Endothelial cell of umbilical vein (primary cell): ENCODE measurements at regions of chr19 and their contacts with region 1.

Region 1: GRCh38 chr19:18349524-18350128 is 9.2 kb downstream of the PGPEP1 start:
- DNase-seq: peak; percentile 67
- H3K4me3 ChIP-seq: no peak overlapping the region
- H3K27ac ChIP-seq: no peak overlapping the region
- H3K4me1 ChIP-seq: no peaks in the 10 kb centered on the region
- H3K27me3 ChIP-seq: no peaks in the 10 kb centered on the region
- CTCF ChIP-seq: peak; percentile 80 to 86
- POLR2A ChIP-seq: no peak

Region 2: DNA sequence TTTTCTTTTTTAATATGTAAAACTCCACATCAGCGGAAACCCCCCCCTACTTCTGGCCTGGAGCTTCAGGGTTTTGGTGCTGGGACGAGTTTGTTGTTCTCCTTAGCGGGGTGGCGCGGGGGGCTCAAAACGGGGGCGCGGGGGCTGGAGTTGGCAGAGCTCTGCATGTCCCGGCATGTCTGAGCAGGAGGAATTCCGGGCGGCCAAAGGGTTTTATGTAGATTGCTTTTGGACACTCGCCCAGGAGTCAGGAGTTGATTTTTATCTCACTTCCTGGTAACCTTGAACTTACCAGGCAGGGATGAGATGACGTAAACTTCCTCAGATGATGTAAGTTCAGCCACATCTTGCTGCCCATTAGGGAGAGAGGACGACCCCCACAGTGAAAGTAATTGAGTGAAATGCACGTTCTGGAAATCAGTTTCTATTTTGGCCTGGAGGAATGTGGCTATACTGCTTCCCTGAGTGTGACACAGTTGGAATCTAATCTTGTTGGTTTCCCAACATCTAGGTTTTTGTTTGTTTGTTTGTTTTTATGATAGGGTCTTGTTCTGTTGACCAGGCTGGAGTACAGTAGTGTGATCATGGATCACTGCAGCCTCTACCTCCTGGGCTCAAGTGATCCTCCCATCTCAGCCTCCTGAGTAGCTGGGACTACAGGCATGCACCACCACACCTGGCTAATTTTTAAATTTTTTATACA is 15.4 kb after region 1 on chr19:
- CTCF ChIA-PET with region 1: interaction called, 20 read pairs
- POLR2A ChIA-PET with region 1: interaction called, 3 read pairs
- dilution Hi-C with region 1: no loop called
- intact Hi-C with region 1: no loop called
- DNase-seq: peak; percentile 98
- H3K4me3 ChIP-seq: no peak overlapping the region
- H3K27ac ChIP-seq: peak overlapping the region; percentile 91
- H3K4me1 ChIP-seq: peaks cover 28% of the 10 kb centered on the region
- H3K27me3 ChIP-seq: no peaks in the 10 kb centered on the region
- CTCF ChIP-seq: no peak
- POLR2A ChIP-seq: peak; percentile 47

Region 3: DNA sequence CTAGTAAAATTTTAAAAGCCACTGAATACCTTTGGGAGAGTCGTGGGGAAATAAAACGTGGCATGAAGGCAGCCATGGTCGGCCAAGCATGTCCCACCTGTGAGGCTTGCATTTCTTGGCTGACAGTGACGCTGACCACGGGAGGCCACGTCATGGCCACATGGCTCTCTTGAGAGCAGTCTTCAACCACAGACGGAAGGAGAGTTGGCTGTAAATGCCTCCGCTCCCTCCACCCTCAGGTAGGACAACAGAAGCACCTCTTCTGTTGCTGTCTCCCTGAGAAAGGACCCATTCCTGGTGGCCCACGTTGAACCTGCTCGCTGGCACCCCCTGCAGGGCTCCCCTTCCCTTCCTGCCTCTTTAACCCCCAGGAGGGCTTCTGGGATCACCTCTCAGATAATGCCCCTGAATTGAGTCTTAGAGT is 58.4 kb after region 1 on chr19:
- CTCF ChIA-PET with region 1: interaction called, 160 read pairs
- POLR2A ChIA-PET with region 1: no interaction called
- dilution Hi-C with region 1: no loop called
- intact Hi-C with region 1: loop called (anchors 1 kb)
- DNase-seq: no peak
- H3K4me3 ChIP-seq: no peak overlapping the region
- H3K27ac ChIP-seq: no peak overlapping the region
- H3K4me1 ChIP-seq: no peaks in the 10 kb centered on the region
- H3K27me3 ChIP-seq: no peaks in the 10 kb centered on the region
- CTCF ChIP-seq: peak; percentile 55 to 69
- POLR2A ChIP-seq: no peak

Region 4: DNA sequence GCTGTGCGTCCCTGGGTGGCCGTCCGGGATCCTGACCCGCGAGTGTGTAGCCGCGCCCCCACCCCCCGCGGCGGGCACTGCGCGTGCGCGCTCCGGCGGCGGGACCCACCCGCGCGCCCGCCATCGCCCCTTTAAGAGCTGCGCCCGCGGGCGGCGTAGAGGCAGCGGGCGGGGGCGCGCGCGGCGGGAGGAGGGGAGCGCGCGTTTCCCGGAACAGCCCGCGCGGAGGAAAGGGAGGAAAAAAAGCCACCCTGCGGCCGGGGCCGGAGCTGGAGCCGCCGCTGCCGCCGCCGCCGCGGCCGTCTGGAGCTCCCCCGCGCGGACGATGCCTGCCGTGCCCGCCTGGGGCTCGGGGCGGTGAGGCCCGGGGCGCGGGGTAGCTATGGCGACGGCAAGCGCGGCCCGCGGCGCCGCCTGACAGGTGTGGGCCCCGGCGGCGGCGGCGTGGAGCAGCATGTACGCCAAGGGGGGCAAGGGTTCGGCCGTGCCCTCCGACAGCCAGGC is 69.6 kb after region 1 on chr19 and contains the start of gene SSBP4:
- CTCF ChIA-PET with region 1: interaction called, 160 read pairs
- POLR2A ChIA-PET with region 1: no interaction called
- dilution Hi-C with region 1: no loop called
- intact Hi-C with region 1: no loop called
- DNase-seq: peak; percentile 76
- H3K4me3 ChIP-seq: peak within 1 kb of the TSS; percentile 50 to 73 (median 53)
- H3K27ac ChIP-seq: peak within 1 kb of the TSS; percentile 54
- H3K4me1 ChIP-seq: peaks cover 46% of the 10 kb centered on the region
- H3K27me3 ChIP-seq: no peaks in the 10 kb centered on the region
- CTCF ChIP-seq: peak; percentile 19 to 31
- POLR2A ChIP-seq: peak; percentile 49
- total RNA-seq, gene SSBP4: 140 and 151 TPM in 2 replicates

Region 5: DNA sequence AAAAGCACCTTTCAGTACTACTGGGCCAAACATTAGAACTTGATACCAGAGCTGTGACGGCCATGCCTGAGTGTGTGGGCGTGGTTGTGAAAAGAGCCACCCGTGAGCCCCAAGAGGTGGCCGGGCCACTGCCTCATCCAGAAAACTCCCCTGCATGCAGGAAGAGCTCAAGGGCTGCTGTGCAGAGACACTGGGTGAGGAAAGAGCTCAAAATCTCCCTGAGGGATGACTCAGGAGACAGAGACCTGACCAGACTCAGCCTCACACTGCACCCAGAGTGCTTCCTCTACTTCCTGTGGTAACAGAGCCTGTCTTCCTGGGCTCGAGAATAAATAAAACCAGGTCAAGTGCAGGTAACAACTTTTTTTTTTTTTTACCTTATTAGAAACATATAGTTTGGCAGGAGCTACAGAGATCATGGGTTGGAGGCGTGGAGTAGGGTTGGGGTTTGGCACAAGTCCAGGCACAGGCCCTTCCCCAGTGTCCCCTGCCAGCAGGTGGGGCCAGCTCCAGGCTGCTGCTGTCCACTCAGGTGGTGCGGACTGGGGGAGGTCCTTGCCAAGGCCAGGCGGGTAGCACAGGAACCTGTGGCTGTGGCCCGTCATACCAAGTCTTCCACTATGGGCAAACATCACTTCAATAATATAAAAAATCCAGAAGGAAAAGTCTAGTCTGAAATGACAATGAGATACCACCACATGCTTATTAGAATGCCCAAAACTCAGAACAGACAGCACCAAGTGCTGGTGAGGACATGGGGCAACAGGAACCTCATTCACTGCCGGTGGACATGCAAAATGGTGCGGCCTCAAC is 146.7 kb after region 1 on chr19:
- CTCF ChIA-PET with region 1: no interaction called
- POLR2A ChIA-PET with region 1: no interaction called
- dilution Hi-C with region 1: no loop called
- intact Hi-C with region 1: no loop called
- DNase-seq: no peak
- H3K4me3 ChIP-seq: no peak overlapping the region
- H3K27ac ChIP-seq: no peak overlapping the region
- H3K4me1 ChIP-seq: peaks cover 6% of the 10 kb centered on the region
- H3K27me3 ChIP-seq: no peaks in the 10 kb centered on the region
- CTCF ChIP-seq: no peak
- POLR2A ChIP-seq: no peak